ENCODE measurements at regions of chr16 and their contacts with region 1.

Region 1: DNA sequence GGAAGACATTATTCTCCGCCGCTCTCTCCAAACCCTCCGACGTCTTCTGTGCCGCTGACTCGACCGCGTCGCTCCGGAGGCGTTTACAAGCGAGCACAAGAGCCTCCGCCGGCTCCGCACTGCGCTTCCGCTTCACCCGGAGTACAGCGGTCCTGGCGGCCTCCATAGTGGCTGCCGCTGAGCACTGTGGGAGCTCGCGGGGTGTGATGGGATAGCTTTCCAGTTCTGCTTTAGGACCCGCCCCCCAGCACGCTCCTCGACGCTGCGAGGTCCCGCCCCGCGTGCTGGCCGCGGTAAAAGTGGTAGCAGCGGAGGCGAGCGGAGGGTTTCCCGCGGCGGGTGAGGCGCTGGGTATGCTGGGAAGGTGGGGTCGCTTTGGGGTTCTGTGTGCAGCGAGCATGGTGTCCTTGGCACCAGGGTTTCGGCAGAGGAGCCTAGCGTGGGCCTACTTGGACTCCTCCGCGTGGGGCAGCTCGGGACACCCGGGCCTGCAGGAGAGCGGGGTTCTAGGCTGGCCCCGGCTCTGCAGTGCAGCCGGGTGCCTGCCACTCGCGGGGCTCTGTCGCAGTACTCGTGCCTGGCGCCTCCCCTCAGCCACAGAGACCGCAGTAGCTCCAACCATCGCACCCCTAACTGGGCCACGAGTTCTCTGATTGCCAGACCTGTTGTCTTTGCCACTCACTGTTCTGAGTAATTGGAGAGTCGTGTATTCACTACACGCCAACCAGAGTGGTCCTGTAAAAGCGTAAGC is at the starts of genes PRMT7 and SLC7A6OS:
- DNase-seq: peak; percentile 54
- H3K4me3 ChIP-seq: peak within 1 kb of the TSS; percentile 99
- H3K27ac ChIP-seq: peak within 1 kb of the TSS; percentile 81
- H3K27me3 ChIP-seq: no peaks in the 10 kb centered on the region
- CTCF ChIP-seq: no peak
- polyA plus RNA-seq, gene PRMT7: 26.2 and 32.4 TPM in 2 replicates
- polyA plus RNA-seq, gene SLC7A6OS: 8.5 and 10.9 TPM in 2 replicates

Region 2: GRCh38 chr16:68237243-68238028 is 73.5 kb before region 1 on chr16:
- CTCF ChIA-PET with region 1: interaction called, 3 read pairs
- POLR2A ChIA-PET with region 1: interaction called, 11 read pairs
- DNase-seq: peak; percentile 94
- H3K4me3 ChIP-seq: peak overlapping the region; percentile 69
- H3K27ac ChIP-seq: peak overlapping the region; percentile 94
- H3K27me3 ChIP-seq: no peaks in the 10 kb centered on the region
- CTCF ChIP-seq: no peak

Region 3: GRCh38 chr16:68298907-68299561 is 11.9 kb before region 1 on chr16:
- CTCF ChIA-PET with region 1: no interaction called
- POLR2A ChIA-PET with region 1: interaction called, 10 read pairs
- DNase-seq: no peak
- H3K4me3 ChIP-seq: no peak overlapping the region
- H3K27ac ChIP-seq: peak overlapping the region; percentile 21
- H3K27me3 ChIP-seq: no peaks in the 10 kb centered on the region
- CTCF ChIP-seq: no peak

Region 4: DNA sequence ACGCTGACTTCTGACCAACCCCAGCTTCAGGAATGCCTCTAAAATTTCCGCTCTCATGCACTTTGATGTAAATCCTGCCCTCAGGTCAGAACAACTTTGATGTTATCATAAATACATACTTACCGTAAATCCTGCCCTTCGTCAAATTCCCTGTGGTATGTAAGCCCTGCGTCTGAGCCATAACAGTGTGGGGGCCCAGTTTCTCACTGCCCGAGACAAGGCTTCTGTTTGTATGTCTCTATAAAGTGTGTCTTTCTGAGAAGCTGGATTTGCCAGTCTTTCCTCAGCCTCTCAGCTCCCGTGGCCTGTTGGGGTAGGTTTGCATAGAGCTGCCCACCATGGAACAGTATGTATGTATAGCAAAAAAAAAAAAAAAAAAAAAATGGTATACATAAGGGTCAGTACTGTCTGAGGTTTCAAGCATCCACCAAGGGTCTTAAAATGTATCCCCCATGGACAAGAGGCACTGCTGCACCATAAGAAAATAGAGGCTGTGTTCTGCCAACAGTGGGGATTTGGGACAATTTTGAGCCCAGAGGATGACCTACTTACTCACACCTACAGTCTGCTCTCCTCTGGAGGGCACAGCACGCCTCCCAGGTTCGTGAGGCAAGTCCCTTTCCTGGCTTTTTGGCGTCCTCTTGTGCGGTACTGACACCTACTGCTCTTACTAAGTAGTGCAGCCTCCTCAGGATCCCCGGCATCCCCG is 17.4 kb after region 1 on chr16:
- CTCF ChIA-PET with region 1: interaction called, 15 read pairs
- POLR2A ChIA-PET with region 1: interaction called, 12 read pairs
- DNase-seq: peak; percentile 67
- H3K4me3 ChIP-seq: no peak overlapping the region
- H3K27ac ChIP-seq: no peak overlapping the region
- H3K27me3 ChIP-seq: no peaks in the 10 kb centered on the region
- CTCF ChIP-seq: peak; percentile 95

Measured in AG04450 (cell line).